ENCODE measurements at regions of chr9 and their contacts with region 1.

Region 1: GRCh38 chr9:27573634-27574590 is 631 bp upstream of the C9orf72 start:
- DNase-seq: peak; percentile 94
- H3K4me3 Mint-ChIP-seq: peak overlapping the region; percentile 90
- H3K27ac Mint-ChIP-seq: peak overlapping the region; percentile 100
- H3K4me1 Mint-ChIP-seq: peaks cover 30% of the 10 kb centered on the region
- H3K27me3 Mint-ChIP-seq: peaks cover 12% of the 10 kb centered on the region

Region 2: GRCh38 chr9:26892251-26893029 is 681.5 kb before region 1 on chr9 and contains the start of gene CAAP1:
- intact Hi-C with region 1: loop called (anchors 1 kb)
- DNase-seq: peak; percentile 88
- H3K4me3 Mint-ChIP-seq: peak within 1 kb of the TSS; percentile 96
- H3K27ac Mint-ChIP-seq: peak within 1 kb of the TSS; percentile 100
- H3K4me1 Mint-ChIP-seq: peaks cover 35% of the 10 kb centered on the region
- H3K27me3 Mint-ChIP-seq: no peaks in the 10 kb centered on the region
- total RNA-seq, gene CAAP1: 19.1 and 19.8 TPM in 2 replicates

Region 3: GRCh38 chr9:26955921-26956859 is 617.7 kb before region 1 on chr9 and contains the start of gene IFT74:
- intact Hi-C with region 1: loop called (anchors 1 kb)
- DNase-seq: peak; percentile 94
- H3K4me3 Mint-ChIP-seq: peak within 1 kb of the TSS; percentile 89
- H3K27ac Mint-ChIP-seq: peak within 1 kb of the TSS; percentile 90
- H3K4me1 Mint-ChIP-seq: peaks cover 40% of the 10 kb centered on the region
- H3K27me3 Mint-ChIP-seq: no peaks in the 10 kb centered on the region
- total RNA-seq, gene IFT74: 7.9 and 9.5 TPM in 2 replicates

Region 4: DNA sequence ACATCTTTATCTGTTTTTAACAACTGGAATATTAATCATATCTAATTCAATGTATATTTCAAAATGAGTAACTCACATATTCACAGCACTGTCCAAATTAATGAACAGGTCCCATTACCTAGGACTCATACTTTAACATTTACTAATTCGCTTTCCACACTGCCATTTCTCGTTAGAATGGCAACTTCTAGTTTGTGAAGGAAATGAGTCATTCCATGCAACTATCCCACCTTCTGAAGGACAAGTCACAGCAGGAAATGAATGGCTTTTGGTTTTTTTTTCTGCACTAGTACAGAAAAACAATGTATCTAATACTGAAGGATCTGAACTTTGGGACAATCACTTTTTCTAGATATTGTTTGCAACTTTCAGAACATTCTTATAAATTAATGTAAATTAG is 74.4 kb before region 1 on chr9:
- intact Hi-C with region 1: loop called (anchors 1 kb)
- DNase-seq: no peak
- H3K4me3 Mint-ChIP-seq: no peak overlapping the region
- H3K27ac Mint-ChIP-seq: no peak overlapping the region
- H3K4me1 Mint-ChIP-seq: peaks cover 22% of the 10 kb centered on the region
- H3K27me3 Mint-ChIP-seq: peaks cover 2% of the 10 kb centered on the region

Region 5: GRCh38 chr9:27514551-27514950 is 59.4 kb before region 1 on chr9:
- intact Hi-C with region 1: no loop called
- DNase-seq: no peak
- H3K4me3 Mint-ChIP-seq: no peak overlapping the region
- H3K27ac Mint-ChIP-seq: no peak overlapping the region
- H3K4me1 Mint-ChIP-seq: no peaks in the 10 kb centered on the region
- H3K27me3 Mint-ChIP-seq: no peaks in the 10 kb centered on the region

Region 6: DNA sequence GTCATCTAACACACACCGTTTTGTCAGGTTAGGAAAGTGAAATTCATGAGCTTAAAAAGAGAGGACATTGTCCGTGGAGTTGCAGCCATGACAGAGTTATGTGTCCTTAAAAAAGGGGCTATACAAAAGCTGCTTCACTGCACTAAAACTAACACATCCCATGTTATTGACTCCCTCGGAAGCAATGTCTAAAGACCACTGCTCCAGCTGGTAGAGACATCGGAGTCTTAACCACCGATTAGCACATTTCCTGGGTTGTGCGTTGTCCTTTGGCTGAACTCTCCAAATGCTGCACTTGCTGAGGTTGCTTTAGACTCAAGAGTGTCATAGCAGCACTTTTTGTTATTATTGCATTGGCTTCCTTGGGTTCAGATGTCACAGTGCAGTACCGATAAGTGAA is 127.7 kb after region 1 on chr9:
- intact Hi-C with region 1: no loop called
- DNase-seq: no peak
- H3K4me3 Mint-ChIP-seq: no peak overlapping the region
- H3K27ac Mint-ChIP-seq: no peak overlapping the region
- H3K4me1 Mint-ChIP-seq: no peaks in the 10 kb centered on the region
- H3K27me3 Mint-ChIP-seq: peaks cover 2% of the 10 kb centered on the region

Region 7: DNA sequence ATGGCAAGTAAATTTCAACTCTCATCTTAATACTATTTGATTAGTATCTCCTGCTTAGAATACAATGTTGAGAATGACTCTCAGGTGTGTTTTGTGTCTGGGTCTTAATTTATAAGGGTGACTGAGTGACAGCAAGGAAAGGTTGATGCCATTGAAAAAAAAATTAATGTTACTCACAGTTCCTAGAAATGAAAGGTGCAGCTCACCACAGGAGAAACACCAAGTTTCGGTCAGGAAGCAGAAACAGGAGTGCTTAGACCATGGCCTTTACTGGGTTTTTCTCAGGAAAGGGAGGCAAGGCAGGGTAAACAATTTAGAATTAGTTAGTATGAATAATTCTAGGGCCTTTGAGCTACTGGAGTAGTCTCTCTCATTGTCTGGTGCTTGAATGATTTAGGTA is 158.6 kb after region 1 on chr9:
- intact Hi-C with region 1: loop called (anchors 2 kb)
- DNase-seq: no peak
- H3K4me3 Mint-ChIP-seq: no peak overlapping the region
- H3K27ac Mint-ChIP-seq: peak overlapping the region; percentile 18
- H3K4me1 Mint-ChIP-seq: peaks cover 22% of the 10 kb centered on the region
- H3K27me3 Mint-ChIP-seq: peaks cover 5% of the 10 kb centered on the region

Measured in activated T-helper 1 cell treated with anti-CD3 and anti-CD28 coated beads, Interleukin-12 subunit alpha, Interleukin-12 subunit beta, Interleukin-2, Interleukin-4 antibody, amounts not matched to agents 30 ng/mL and 10 ng/mL and 1 ng/mL, durations not matched to agents 14 hours and 24 hours and 36 hours (primary cell).